Tibial artery (tissue), 4 donors: ENCODE measurements at regions of chr7 and their contacts with region 1.

Region 1: GRCh38 chr7:121041516-121042148 is 53.1 kb downstream of the CPED1 start:
- DNase-seq: no peak
- H3K4me3 ChIP-seq: peak overlapping the region in 1 of 2 donors; percentile 18
- H3K27ac ChIP-seq: peak overlapping the region; percentile 70
- H3K4me1 ChIP-seq: peaks cover 0 to 65% (median 32%) of the 10 kb centered on the region in 4 donors
- H3K27me3 ChIP-seq: no peaks in the 10 kb centered on the region
- CTCF ChIP-seq: no peak

Region 2: DNA sequence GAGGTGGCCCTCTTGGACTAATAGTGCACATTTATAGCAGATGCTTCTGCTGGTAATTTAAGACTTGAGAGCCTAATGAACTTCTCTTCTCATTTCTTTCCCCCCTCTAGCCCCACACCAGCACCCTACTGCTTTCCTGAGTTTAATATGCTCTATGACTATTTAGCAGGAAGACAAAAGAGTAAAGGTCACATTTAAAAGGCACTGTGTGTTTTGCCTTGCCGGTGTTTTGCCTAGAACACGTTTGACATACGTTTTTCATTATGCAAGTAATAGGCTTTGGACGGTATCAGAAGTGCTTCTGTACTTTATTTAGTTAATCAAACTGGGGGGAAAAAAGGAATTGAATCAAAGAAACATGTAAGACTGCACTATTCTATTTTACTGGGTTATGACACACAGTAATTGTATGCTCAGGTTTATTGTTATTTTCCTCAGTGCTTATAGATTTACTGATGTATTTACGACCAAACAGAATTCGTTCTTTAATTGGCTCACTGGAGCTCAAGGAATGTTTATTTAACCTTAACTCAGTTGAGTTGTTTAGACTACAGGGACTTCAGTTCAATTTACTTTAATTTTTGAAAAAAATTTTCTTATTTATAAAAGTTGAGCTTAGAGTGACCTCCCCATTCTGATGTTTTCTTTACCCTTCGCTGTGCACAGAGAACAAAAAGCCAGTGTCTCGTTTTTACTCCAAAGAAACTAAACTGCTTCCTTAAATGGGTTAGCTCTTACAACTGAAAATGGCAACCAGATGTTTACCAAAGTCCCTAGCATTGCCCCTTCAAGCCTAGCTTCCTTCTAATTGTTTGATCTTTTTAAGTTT is 17.7 kb before region 1 on chr7:
- intact Hi-C with region 1: loop called (anchors 2 kb)
- DNase-seq: no peak
- H3K4me3 ChIP-seq: peak overlapping the region in 1 of 2 donors; percentile 4
- H3K27ac ChIP-seq: peak overlapping the region; percentile 74 to 78
- H3K4me1 ChIP-seq: peaks cover 0 to 95% (median 38%) of the 10 kb centered on the region in 4 donors
- H3K27me3 ChIP-seq: no peaks in the 10 kb centered on the region
- CTCF ChIP-seq: no peak